Naive thymus-derived CD4-positive, alpha-beta T cell (primary cell): ENCODE measurements at regions of chr3 and their contacts with region 1.

Region 1: GRCh38 chr3:164507886-164508285 is 570.4 kb downstream of the SI start:
- DNase-seq: no peak
- ATAC-seq: no peak
- H3K4me3 ChIP-seq: no peak overlapping the region
- H3K4me3 Mint-ChIP-seq: no peak overlapping the region
- H3K27ac ChIP-seq: no peak overlapping the region
- H3K27ac Mint-ChIP-seq: no peak overlapping the region
- H3K4me1 ChIP-seq: no peaks in the 10 kb centered on the region
- H3K4me1 Mint-ChIP-seq: no peaks in the 10 kb centered on the region
- H3K27me3 ChIP-seq: no peaks in the 10 kb centered on the region
- H3K27me3 Mint-ChIP-seq: no peaks in the 10 kb centered on the region

Region 2: DNA sequence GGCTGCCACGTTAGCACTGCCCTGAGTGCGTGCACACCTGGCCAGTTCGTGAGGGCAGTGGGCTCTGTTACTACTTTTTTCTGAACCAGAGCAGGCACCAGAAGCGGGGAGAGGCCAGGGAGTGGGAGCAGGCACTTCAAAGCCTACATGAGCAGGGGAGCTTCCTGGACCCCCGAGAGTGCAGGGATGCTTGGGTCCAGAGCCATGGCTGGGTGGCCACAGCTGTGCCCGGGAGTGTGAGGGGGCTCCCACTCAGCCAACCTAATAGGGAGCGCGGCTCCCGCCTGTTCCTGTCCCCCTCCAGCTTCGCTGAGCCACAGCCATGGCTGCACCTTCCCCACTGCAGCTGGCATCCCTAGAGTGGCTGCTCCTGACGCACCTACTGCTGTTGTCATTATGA is 852.9 kb before region 1 on chr3:
- CTCF ChIA-PET with region 1: no interaction called
- POLR2A ChIA-PET with region 1: no interaction called
- intact Hi-C with region 1: no loop called
- DNase-seq: no peak
- ATAC-seq: no peak
- H3K4me3 ChIP-seq: no peak overlapping the region
- H3K4me3 Mint-ChIP-seq: no peak overlapping the region
- H3K27ac ChIP-seq: no peak overlapping the region
- H3K27ac Mint-ChIP-seq: no peak overlapping the region
- H3K4me1 ChIP-seq: no peaks in the 10 kb centered on the region
- H3K4me1 Mint-ChIP-seq: no peaks in the 10 kb centered on the region
- H3K27me3 ChIP-seq: no peaks in the 10 kb centered on the region
- H3K27me3 Mint-ChIP-seq: no peaks in the 10 kb centered on the region

Region 3: DNA sequence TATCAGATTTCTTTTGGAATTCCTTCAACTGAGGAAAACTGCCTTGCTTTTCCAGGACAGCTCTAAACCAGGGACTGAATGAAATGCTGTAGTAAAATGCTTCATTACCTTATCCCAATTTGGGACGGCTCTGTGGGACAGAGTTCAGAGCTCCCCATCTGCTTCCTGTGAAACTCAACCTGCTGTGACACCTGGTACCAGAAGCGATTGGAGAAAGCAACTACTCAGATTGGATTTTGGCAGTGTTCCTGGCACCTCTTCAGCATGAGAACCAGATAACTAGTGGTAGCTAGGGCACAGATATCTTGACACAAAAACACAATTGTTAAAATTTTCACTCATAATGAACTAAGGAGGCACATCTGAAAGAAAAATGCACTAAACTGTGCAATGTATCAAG is 31.3 kb after region 1 on chr3:
- CTCF ChIA-PET with region 1: no interaction called
- POLR2A ChIA-PET with region 1: no interaction called
- intact Hi-C with region 1: loop called in 1 of 2 experiments (anchors 1 kb)
- DNase-seq: no peak
- ATAC-seq: no peak
- H3K4me3 ChIP-seq: no peak overlapping the region
- H3K4me3 Mint-ChIP-seq: no peak overlapping the region
- H3K27ac ChIP-seq: no peak overlapping the region
- H3K27ac Mint-ChIP-seq: no peak overlapping the region
- H3K4me1 ChIP-seq: no peaks in the 10 kb centered on the region
- H3K4me1 Mint-ChIP-seq: no peaks in the 10 kb centered on the region
- H3K27me3 ChIP-seq: no peaks in the 10 kb centered on the region
- H3K27me3 Mint-ChIP-seq: no peaks in the 10 kb centered on the region